ENCODE measurements at regions of chr19 and their contacts with region 1.

Region 1: DNA sequence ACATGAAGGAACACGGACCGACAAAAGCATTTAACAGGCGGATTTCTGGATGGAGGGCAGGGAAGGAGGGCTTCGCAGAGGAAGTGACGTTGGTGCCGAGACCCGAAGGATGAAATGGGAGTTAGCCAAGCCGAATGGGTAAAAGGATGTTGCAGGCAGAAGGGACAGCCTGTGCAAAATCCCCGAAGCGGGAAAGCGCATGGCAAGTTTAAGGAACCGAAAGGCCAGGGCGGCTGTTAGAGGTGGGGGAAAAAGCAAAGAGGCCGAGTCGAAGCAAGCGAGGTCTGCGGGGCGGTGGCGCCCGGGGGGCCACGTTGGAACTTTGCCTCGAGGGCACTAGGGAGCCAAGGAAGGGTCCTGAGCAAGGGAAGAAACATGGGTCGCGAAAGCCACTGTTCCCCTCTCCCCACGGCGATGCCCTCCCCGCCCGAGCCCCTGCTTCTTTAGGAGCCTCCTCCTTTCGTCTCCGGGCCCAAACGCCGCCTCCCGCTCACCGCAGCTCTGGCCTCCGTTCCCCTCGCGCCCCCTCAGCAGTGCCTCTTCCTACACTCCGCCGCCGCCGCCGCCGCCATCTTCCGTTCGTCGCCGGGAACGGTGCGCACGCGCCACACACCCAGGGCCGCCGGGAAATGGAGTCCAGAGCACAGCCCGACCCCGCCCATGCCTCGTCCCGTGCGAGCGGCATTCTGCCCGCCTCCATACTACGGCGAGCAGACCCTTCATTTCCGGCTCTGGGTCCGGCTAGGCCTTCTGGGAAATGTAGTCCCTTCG is at the start of gene SYMPK:
- DNase-seq: peak; percentile 98
- H3K4me3 ChIP-seq: peak within 1 kb of the TSS; percentile 94 to 97 (median 94)
- H3K27ac ChIP-seq: peak within 1 kb of the TSS; percentile 86
- H3K4me1 ChIP-seq: no peaks in the 10 kb centered on the region
- H3K27me3 ChIP-seq: peaks cover 2% of the 10 kb centered on the region
- CTCF ChIP-seq: no peak
- total RNA-seq, gene SYMPK: 32.3 to 81.6 TPM

Region 2: GRCh38 chr19:45785781-45786532 is 76.8 kb before region 1 on chr19:
- CTCF ChIA-PET with region 1: no interaction called
- dilution Hi-C with region 1: loop called (anchors 5 kb)
- in situ Hi-C with region 1: no loop called
- intact Hi-C with region 1: no loop called
- DNase-seq: no peak
- H3K4me3 ChIP-seq: no peak overlapping the region
- H3K27ac ChIP-seq: no peak overlapping the region
- H3K4me1 ChIP-seq: peaks cover 31% of the 10 kb centered on the region
- H3K27me3 ChIP-seq: no peaks in the 10 kb centered on the region
- CTCF ChIP-seq: no peak

Region 3: GRCh38 chr19:45817010-45817724 is 45.6 kb before region 1 on chr19:
- CTCF ChIA-PET with region 1: interaction called, 15 read pairs
- dilution Hi-C with region 1: no loop called
- in situ Hi-C with region 1: no loop called
- intact Hi-C with region 1: no loop called
- DNase-seq: peak; percentile 75
- H3K4me3 ChIP-seq: no peak overlapping the region
- H3K27ac ChIP-seq: no peak overlapping the region
- H3K4me1 ChIP-seq: peaks cover 14% of the 10 kb centered on the region
- H3K27me3 ChIP-seq: no peaks in the 10 kb centered on the region
- CTCF ChIP-seq: peak; percentile 96 to 98

Region 4: GRCh38 chr19:45824041-45824471 is 38.7 kb before region 1 on chr19:
- CTCF ChIA-PET with region 1: no interaction called
- dilution Hi-C with region 1: loop called (anchors 5 kb)
- in situ Hi-C with region 1: no loop called
- intact Hi-C with region 1: no loop called
- DNase-seq: peak; percentile 63
- H3K4me3 ChIP-seq: no peak overlapping the region
- H3K27ac ChIP-seq: no peak overlapping the region
- H3K4me1 ChIP-seq: peaks cover 6% of the 10 kb centered on the region
- H3K27me3 ChIP-seq: no peaks in the 10 kb centered on the region
- CTCF ChIP-seq: no peak

Region 5: DNA sequence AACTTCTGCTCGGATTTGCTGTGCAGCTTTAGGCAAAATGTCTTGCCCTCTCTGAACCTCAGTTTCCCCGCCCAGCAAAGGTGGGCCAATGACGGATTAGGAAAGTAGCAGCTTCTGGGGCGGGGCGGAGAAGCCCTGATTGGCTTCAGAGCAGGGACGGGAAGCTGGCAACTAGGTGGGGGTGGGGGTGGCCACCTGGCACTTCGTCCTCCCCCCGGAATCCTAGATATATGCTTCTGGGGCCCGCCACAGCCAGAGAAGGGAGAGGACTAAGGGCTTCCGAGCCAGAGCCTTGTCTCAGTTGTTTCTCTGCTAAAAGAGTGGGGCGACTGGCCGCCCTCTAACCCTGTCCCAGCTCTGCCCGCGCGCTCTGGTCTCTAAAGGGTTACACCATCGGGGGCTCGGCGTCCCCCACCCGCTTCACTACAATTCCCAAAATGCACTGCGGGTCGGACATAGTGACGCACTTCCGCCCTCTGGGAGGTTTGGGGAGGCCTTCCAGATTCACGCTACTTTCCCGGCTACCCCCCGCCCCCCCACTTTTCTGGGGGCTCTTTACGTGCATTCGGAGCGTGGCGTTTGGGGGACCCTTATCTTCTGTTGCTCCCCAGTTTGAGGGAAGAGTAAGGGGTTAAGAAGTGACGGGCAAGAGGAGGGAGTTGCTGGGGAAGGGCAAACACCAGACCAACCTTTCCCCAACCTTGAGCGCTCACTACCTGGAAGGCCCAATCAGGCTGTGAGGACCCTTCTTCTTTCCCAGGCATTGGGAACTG is 23.9 kb after region 1 on chr19:
- CTCF ChIA-PET with region 1: no interaction called
- dilution Hi-C with region 1: no loop called
- in situ Hi-C with region 1: no loop called
- intact Hi-C with region 1: loop called (anchors 1 kb)
- DNase-seq: peak; percentile 95
- H3K4me3 ChIP-seq: peak overlapping the region; percentile 54 to 74 (median 61)
- H3K27ac ChIP-seq: peak overlapping the region; percentile 73
- H3K4me1 ChIP-seq: peaks cover 32% of the 10 kb centered on the region
- H3K27me3 ChIP-seq: no peaks in the 10 kb centered on the region
- CTCF ChIP-seq: no peak

Region 6: GRCh38 chr19:45913874-45914830 is 51.4 kb after region 1 on chr19 and contains the start of gene NANOS2:
- CTCF ChIA-PET with region 1: no interaction called
- dilution Hi-C with region 1: no loop called
- in situ Hi-C with region 1: no loop called
- intact Hi-C with region 1: no loop called
- DNase-seq: no peak
- H3K4me3 ChIP-seq: no peak within 1 kb of the TSS
- H3K27ac ChIP-seq: no peak within 1 kb of the TSS
- H3K4me1 ChIP-seq: no peaks in the 10 kb centered on the region
- H3K27me3 ChIP-seq: no peaks in the 10 kb centered on the region
- CTCF ChIP-seq: peak in 1 of 2 donors; percentile 12
- total RNA-seq, gene NANOS2: not detected

Region 7: DNA sequence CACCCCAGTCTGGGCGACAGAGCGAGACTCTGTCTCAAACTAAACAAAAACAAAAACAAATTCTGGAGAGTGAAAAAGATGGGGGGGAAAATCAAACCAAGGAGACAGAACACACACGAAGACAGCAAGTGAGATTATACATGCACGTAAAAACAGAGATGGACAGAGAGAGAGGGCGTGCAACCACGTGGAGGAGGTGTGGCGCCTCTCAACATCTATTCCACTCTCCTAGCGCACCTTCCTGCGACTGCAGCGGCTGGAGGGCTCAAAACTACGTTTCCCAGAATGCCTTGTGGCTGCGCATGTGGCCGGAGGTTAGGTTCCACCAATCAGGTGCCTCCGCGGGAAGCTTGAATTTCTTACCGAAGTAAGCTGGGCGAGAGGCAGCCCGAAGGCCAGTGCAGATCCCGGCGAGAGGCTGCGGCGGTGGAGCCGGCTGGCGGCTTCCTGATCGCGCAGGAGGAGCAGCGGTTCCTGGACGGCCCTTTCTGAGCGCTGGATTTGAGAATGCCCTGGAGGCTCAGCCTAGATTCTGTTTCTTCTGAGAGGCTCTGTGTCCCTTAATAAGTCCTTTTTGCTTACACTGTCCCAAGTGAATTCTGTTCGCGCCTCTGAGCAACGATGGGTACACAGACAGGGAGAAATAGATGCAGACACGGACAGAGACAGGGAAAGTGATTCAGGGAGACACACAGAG is 65.0 kb after region 1 on chr19:
- CTCF ChIA-PET with region 1: no interaction called
- dilution Hi-C with region 1: loop called (anchors 5 kb)
- in situ Hi-C with region 1: no loop called
- intact Hi-C with region 1: no loop called
- DNase-seq: peak; percentile 88
- H3K4me3 ChIP-seq: peak overlapping the region; percentile 5 to 23 (median 22)
- H3K27ac ChIP-seq: no peak overlapping the region
- H3K4me1 ChIP-seq: peaks cover 6% of the 10 kb centered on the region
- H3K27me3 ChIP-seq: peaks cover 3% of the 10 kb centered on the region
- CTCF ChIP-seq: no peak